Ovary (tissue), 10 donors: ENCODE measurements at regions of chr10 and their contacts with region 1.

Region 1: GRCh38 chr10:127012769-127013152 is 107.5 kb downstream of the DOCK1 start:
- DNase-seq: no peak
- H3K4me3 ChIP-seq: no peak overlapping the region
- H3K27ac ChIP-seq: no peak overlapping the region
- H3K4me1 ChIP-seq: peaks cover 4% of the 10 kb centered on the region
- H3K27me3 ChIP-seq: no peaks in the 10 kb centered on the region
- CTCF ChIP-seq: no peak
- EP300 ChIP-seq: no peak
- POLR2A ChIP-seq: no peak

Region 2: GRCh38 chr10:126373147-126373546 is 639.6 kb before region 1 on chr10:
- intact Hi-C with region 1: loop called in 1 of 4 experiments (anchors 5 kb)
- DNase-seq: peak in 4 of 5 donors; percentile 24 to 41 (median 33)
- H3K4me3 ChIP-seq: no peak overlapping the region
- H3K27ac ChIP-seq: no peak overlapping the region
- H3K4me1 ChIP-seq: peaks cover 10% of the 10 kb centered on the region
- H3K27me3 ChIP-seq: no peaks in the 10 kb centered on the region
- CTCF ChIP-seq: no peak
- EP300 ChIP-seq: no peak
- POLR2A ChIP-seq: no peak